ENCODE measurements at regions of chr11 and their contacts with region 1.

Region 1: DNA sequence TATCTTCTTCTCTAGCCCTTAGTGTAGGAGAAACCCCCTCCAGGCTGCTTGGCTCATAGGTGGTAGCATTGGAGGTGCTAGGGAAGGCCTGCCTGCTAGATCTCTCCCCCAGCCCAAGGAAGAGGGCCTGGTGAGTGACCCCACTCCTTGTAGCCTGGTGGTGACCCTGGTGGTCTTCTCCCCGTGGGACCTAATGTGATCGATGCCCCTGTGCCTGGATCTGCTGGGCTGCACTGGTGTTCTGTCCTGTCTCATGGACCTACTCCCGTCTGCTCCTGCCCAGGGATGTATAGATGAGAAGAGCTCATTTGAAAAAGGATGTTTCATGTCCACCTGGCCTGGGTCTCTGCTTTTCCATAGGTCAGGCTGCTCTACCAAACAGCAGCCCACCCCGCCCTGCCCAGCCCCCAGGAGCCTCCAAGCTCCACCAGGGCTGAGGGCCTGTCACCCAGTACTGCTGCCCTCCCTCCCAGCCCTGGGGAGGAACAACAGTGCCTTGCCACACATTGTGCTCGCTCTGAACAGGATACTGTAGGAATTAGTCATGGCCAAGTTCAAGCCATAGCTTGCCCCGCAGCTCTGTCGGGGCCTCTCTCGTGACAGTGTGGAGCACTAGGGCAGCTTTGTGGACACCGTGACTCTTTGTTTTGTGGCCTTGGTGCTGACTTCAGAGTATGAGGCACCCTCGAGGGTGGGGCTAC is 19.7 kb downstream of the SLC37A2 start:
- DNase-seq: peak; percentile 89
- H3K4me3 Mint-ChIP-seq: peak overlapping the region; percentile 68
- H3K27ac Mint-ChIP-seq: peak overlapping the region; percentile 96
- H3K4me1 Mint-ChIP-seq: peaks cover 48% of the 10 kb centered on the region
- H3K27me3 Mint-ChIP-seq: no peaks in the 10 kb centered on the region
- CTCF ChIP-seq: no peak

Region 2: DNA sequence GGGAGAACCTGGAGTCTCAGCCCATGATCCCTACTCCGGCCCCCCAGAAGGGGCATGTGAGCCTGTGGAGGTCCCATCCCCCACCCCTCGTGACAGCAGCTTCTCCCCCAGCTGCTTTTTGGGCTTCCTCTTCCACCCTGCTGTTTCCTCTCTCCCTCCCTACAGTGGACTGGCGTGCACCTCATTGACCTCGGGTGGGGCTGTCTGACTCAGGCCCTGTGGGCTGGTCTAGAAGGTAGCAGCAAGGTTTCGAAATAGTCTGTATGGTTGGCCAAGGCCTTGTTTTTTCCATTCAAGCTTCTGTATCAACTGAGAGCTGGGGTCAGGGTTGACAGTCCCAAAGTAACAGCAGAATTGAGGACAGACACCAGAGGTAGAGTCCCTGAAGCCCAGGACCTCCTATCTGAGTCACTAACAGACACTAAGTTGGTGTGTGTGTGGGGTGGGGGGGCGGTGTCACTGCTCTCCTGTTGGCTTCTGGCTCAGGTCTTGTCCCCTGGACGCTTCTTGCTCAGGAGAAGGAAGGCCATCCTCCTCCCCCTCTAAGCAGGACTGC is 12.0 kb before region 1 on chr11:
- CTCF ChIA-PET with region 1: interaction called, 13 read pairs
- POLR2A ChIA-PET with region 1: interaction called, 29 read pairs
- intact Hi-C with region 1: no loop called
- DNase-seq: peak; percentile 90
- H3K4me3 Mint-ChIP-seq: no peak overlapping the region
- H3K27ac Mint-ChIP-seq: peak overlapping the region; percentile 88
- H3K4me1 Mint-ChIP-seq: peaks cover 33% of the 10 kb centered on the region
- H3K27me3 Mint-ChIP-seq: no peaks in the 10 kb centered on the region
- CTCF ChIP-seq: no peak

Measured in MCF 10A (cell line).